CD4-positive, alpha-beta T cell (primary cell): ENCODE measurements at regions of chr4 and their contacts with region 1.

Region 1: DNA sequence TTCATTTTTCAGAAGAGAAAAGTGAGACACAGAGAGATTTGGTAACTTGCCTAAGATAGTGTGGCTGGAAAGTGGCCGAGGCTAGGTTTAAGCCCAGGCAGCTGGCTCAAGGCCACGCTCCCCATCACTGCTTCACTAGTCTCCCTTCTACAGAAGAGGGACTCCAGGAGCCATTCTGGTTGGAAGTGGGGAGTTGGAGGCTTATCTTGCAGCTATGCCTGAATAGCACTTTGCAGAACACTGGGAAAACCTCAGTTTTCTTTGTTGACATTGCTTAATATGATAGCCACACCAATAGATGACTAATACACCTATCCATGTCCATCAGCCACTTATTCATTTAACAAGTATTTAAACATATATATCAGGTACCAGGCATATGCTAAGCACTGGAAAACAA is 18.5 kb downstream of the LRRC66 start:
- DNase-seq: no peak
- ATAC-seq: no peak
- H3K4me3 ChIP-seq: no peak overlapping the region
- H3K4me3 Mint-ChIP-seq: no peak overlapping the region
- H3K27ac ChIP-seq: no peak overlapping the region
- H3K27ac Mint-ChIP-seq: no peak overlapping the region
- H3K4me1 ChIP-seq: no peaks in the 10 kb centered on the region
- H3K4me1 Mint-ChIP-seq: no peaks in the 10 kb centered on the region
- H3K27me3 ChIP-seq: no peaks in the 10 kb centered on the region
- H3K27me3 Mint-ChIP-seq: no peaks in the 10 kb centered on the region
- CTCF ChIP-seq: no peak

Region 2: DNA sequence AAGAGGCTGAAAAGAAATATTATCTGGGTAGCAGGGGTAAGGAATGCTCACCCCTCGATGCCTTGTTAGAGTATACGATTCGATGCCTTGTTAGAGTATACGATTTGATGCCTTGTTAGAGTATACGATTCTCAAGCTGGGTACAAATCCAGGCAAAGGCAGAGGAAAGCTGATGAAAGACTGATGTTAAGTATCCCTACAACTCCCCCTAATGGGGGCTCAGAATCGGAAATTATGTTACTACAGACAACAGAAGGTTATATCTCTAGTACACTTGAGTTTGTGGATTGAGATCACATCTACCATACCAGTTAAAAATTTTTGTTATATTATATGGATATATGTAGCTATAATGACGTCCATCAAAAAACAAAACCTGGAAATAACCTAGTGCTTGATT is 13.8 kb after region 1 on chr4:
- CTCF ChIA-PET with region 1: no interaction called
- POLR2A ChIA-PET with region 1: no interaction called
- intact Hi-C with region 1: no loop called
- DNase-seq: no peak
- ATAC-seq: no peak
- H3K4me3 ChIP-seq: no peak overlapping the region
- H3K4me3 Mint-ChIP-seq: no peak overlapping the region
- H3K27ac ChIP-seq: no peak overlapping the region
- H3K27ac Mint-ChIP-seq: no peak overlapping the region
- H3K4me1 ChIP-seq: no peaks in the 10 kb centered on the region
- H3K4me1 Mint-ChIP-seq: no peaks in the 10 kb centered on the region
- H3K27me3 ChIP-seq: no peaks in the 10 kb centered on the region
- H3K27me3 Mint-ChIP-seq: no peaks in the 10 kb centered on the region
- CTCF ChIP-seq: no peak

Region 3: GRCh38 chr4:52051619-52052474 is 50.2 kb after region 1 on chr4:
- CTCF ChIA-PET with region 1: no interaction called
- POLR2A ChIA-PET with region 1: no interaction called
- intact Hi-C with region 1: no loop called
- DNase-seq: peak in 2 of 14 experiments; percentile 11 to 23
- ATAC-seq: no peak
- H3K4me3 ChIP-seq: peak overlapping the region; percentile 24
- H3K4me3 Mint-ChIP-seq: peak overlapping the region; percentile 50
- H3K27ac ChIP-seq: no peak overlapping the region
- H3K27ac Mint-ChIP-seq: no peak overlapping the region
- H3K4me1 ChIP-seq: peaks cover 15% of the 10 kb centered on the region
- H3K4me1 Mint-ChIP-seq: peaks cover 24% of the 10 kb centered on the region
- H3K27me3 ChIP-seq: peaks cover 40 to 59% of the 10 kb centered on the region in 2 experiments
- H3K27me3 Mint-ChIP-seq: peaks cover 76% of the 10 kb centered on the region
- CTCF ChIP-seq: no peak

Region 4: DNA sequence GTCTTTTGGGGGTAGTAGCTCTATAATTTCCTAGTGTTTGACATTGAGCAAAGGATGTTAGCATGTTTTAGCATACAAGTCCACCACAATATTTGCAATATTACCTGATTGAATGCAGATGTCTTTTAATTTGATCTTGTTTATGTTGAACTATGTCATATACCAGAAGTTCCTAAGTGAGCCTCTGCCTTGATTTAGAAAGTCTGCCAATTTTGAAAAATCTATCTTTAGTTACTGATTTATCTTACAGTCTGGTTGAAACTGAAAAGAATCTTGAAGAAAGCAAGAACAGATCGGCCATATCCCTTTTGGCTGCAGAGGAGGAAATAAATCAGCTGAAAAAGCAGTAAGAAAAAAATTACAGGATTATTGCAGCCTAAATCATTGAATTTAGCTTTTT is 68.0 kb after region 1 on chr4:
- CTCF ChIA-PET with region 1: no interaction called
- POLR2A ChIA-PET with region 1: no interaction called
- intact Hi-C with region 1: loop called (anchors 10 kb)
- DNase-seq: no peak
- ATAC-seq: no peak
- H3K4me3 ChIP-seq: no peak overlapping the region
- H3K4me3 Mint-ChIP-seq: no peak overlapping the region
- H3K27ac ChIP-seq: no peak overlapping the region
- H3K27ac Mint-ChIP-seq: no peak overlapping the region
- H3K4me1 ChIP-seq: no peaks in the 10 kb centered on the region
- H3K4me1 Mint-ChIP-seq: no peaks in the 10 kb centered on the region
- H3K27me3 ChIP-seq: peaks cover 4 to 36% of the 10 kb centered on the region in 2 experiments
- H3K27me3 Mint-ChIP-seq: peaks cover 67% of the 10 kb centered on the region
- CTCF ChIP-seq: no peak